ENCODE measurements at regions of chr12 and their contacts with region 1.

Region 1: DNA sequence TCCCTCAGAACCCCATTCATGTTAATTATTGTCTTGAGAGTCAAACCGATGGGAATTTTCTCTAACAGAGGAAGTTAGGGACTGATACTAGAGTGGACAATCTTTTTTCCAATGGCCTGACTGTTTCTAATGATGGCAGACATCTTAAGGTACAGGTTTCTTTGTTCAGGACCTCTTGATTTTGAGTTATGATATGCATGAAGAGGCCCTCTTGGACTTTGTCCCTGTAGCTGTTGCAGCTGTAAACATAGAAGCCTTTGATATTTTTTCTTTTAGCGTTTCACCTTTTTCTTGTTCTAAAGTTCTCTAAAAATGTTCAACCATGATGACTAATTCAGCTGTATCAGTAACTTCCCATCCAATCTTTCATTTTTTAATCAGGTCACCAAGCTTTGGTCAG is 53.0 kb downstream of the LGR5 start:
- H3K4me3 Mint-ChIP-seq: no peak overlapping the region
- H3K27ac Mint-ChIP-seq: no peak overlapping the region
- H3K4me1 Mint-ChIP-seq: no peaks in the 10 kb centered on the region
- H3K27me3 Mint-ChIP-seq: no peaks in the 10 kb centered on the region

Region 2: DNA sequence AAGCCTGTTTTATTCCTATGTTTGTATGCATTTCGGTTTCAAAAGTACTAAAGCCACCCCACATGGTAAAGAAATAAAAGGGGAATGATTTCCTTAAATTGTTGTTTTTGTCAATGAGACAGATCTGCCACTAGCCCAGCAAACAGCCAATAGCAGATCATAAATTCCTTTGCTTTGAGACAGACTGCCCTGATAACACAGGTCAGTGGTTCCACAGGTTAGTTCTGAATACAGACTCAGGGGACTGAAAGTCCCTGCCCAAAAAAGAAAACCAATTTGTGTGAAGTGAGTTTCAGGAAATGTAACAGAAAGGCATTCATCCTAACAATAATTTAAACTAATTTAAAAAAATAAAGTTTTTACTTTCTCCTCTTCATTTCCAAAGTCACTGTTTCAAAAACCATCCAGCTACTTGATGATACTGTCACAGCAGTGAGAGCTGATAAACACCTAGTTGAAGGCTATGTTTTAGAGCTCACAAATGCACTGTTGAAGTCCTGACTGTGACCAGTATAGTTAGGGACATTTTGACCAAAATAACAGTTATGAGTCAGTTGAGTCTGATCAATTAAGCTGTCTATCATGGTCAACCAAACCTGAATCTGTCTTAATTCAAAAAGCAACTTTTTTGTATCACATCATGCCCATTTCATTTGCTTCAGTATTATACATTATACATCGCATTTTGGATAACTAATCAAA is 24.7 kb after region 1 on chr12:
- intact Hi-C with region 1: loop called (anchors 1 kb)
- H3K4me3 Mint-ChIP-seq: no peak overlapping the region
- H3K27ac Mint-ChIP-seq: no peak overlapping the region
- H3K4me1 Mint-ChIP-seq: no peaks in the 10 kb centered on the region
- H3K27me3 Mint-ChIP-seq: no peaks in the 10 kb centered on the region

Measured in dendritic cell treated with granulocyte-macrophage colony-stimulating factor and Interleukin-4, amounts not matched to agents 40 ng/mL and 50 ng/mL, for 4 days (primary cell).